Sciatic nerve (tissue), 2 donors: ENCODE measurements at regions of chr5 and their contacts with region 1.

Region 1: DNA sequence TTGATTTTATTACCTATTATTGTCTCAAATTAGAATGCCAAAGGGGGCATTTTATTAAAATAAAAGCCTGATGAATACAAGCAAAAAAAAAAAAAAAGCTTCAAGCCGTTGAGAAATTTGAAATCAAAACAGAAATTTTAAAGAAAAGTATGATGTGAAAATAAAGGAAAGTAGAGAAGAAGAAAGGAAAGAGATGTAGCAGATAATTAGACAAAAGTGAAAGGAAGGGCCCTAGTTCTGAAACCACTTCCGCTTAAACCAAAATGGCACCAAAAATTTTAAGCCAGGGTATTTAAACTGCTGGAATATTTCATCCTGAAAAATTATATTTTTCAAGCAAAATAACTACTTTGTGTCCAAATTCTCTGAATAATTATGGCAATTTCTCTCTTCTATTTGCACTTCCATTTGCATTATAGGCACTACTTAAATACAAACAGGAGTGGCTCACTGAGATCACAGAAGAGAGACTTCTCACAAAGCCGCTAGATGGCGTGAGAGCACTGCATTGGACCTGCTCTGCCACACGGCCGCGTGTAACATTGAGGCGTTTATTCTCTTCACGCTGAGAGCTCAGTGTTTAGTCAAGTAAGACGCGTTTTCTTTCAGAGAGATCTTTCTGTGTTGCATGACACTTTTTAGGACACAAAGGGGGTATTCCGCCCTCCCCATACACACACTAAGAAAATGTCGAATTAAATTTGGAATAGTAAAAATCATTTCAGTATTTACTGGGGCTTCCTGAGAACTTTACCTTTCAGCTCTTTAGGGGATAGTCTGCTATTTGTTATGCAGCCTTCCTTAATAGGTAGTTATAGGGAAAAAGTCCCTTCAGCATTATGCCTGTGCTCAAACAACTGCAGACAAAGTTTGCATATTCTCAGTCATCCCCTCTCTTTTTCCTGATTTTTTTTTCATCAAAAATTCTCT is 368.4 kb upstream of the CCNH start:
- DNase-seq: peak; percentile 90
- ATAC-seq: peak; percentile 96

Region 2: DNA sequence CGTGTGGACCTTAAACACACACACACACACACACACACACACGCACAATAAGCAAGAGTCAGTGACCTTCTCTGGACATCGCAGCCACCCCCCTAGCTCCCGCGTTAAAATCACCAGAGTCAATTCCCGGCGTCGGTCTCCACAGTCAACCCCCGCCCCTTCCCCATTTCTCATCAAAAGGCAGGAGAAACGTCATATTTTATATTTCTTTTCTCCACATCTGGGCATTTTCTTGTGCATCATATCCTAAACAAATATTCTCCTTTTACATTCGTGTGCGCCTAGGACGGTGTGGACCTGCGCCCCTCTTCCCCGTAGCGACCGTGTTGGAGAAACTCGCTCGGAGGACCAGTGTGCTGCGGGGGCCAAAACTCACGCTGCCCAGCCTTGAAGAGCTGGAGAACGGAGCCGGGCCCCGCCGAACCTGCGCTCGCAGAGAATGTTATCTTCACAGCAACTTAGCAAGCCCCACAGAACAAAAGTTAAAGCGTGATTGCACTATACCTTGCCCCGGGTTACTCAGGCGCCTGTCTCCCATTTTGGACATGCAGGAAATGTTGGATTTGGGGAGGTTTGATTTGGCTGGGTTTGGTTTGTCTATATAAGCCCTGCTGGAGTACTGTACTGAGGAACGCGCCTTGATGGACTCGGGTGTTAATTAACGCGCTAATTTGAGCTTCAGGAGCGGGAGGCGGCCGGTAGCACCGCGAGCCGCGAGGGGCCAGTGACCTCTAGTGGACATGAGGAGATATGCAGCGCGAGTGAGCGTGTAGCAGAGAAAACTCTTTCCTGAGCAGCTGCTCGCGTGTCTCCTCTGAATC is 909.5 kb after region 1 on chr5:
- intact Hi-C with region 1: loop called (anchors 5 kb)
- DNase-seq: peak; percentile 83
- ATAC-seq: peak; percentile 89